B cell (primary cell): ENCODE measurements at regions of chr6 and their contacts with region 1.

Region 1: GRCh38 chr6:34757687-34758274 is 476 bp downstream of the SNRPC start:
- DNase-seq: no peak
- ATAC-seq: no peak
- H3K4me3 ChIP-seq: peak overlapping the region; percentile 87 to 99 (median 95)
- H3K4me3 Mint-ChIP-seq: no peak overlapping the region
- H3K27ac ChIP-seq: peak overlapping the region; percentile 89 to 94
- H3K27ac Mint-ChIP-seq: no peak overlapping the region
- H3K4me1 ChIP-seq: peaks cover 9 to 25% of the 10 kb centered on the region in 2 donors
- H3K4me1 Mint-ChIP-seq: peaks cover 18% of the 10 kb centered on the region
- H3K27me3 ChIP-seq: no peaks in the 10 kb centered on the region
- H3K27me3 Mint-ChIP-seq: no peaks in the 10 kb centered on the region
- CTCF ChIP-seq: no peak

Region 2: DNA sequence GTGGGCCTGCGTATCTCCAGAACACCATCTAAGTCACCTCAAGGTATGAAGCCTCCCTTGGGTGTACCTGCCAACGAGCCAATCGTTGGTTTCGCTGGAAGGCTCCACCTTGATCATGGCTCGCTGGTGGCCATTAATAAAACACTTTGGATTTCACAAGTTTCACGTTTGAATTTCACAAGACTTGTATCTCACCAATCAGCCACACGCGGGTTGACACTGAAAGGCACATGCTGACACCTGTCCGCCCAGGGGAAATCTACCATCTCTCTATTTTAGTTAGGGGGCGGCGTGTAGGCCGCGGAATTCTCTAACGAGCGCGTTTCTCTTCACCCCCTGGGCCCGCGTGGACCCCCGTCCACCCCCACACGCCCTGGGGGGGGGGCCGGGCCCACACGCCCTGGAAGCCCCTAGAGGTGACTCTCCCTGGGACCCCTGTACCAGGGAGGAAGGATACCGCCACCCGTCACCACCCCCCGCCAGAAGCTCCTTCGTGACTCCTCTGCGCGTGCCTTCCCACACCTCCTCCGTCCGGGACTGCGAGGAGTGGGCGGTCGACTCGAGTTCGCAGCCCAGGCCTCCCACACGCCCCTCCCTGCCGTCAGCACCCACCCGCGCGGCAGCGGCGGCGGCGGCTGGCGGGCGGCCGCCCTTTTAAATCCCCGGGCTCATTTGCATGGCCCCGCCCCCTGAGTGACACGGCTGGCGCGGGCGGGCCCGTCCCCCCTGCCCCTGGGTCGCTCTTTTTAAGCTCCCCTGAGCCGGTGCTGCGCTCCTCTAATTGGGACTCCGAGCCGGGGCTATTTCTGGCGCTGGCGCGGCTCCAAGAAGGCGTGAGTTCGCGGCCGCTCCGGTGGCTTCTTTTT is 521.4 kb before region 1 on chr6 and contains the start of gene HMGA1:
- CTCF ChIA-PET with region 1: no interaction called
- POLR2A ChIA-PET with region 1: no interaction called
- intact Hi-C with region 1: loop called (anchors 5 kb)
- DNase-seq: peak; percentile 96
- ATAC-seq: peak; percentile 76
- H3K4me3 ChIP-seq: peak within 1 kb of the TSS; percentile 64 to 93 (median 88)
- H3K4me3 Mint-ChIP-seq: peak within 1 kb of the TSS; percentile 92
- H3K27ac ChIP-seq: peak within 1 kb of the TSS; percentile 96 to 98
- H3K27ac Mint-ChIP-seq: peak within 1 kb of the TSS; percentile 98
- H3K4me1 ChIP-seq: peaks cover 22 to 30% of the 10 kb centered on the region in 2 donors
- H3K4me1 Mint-ChIP-seq: peaks cover 34% of the 10 kb centered on the region
- H3K27me3 ChIP-seq: no peaks in the 10 kb centered on the region
- H3K27me3 Mint-ChIP-seq: no peaks in the 10 kb centered on the region
- CTCF ChIP-seq: no peak
- total RNA-seq, gene HMGA1: 66.4 and 72.3 TPM in 2 replicates

Region 3: GRCh38 chr6:34638834-34639736 is 118.7 kb before region 1 on chr6:
- CTCF ChIA-PET with region 1: no interaction called
- POLR2A ChIA-PET with region 1: no interaction called
- intact Hi-C with region 1: loop called (anchors 2 kb)
- DNase-seq: peak; percentile 74
- ATAC-seq: peak; percentile 77
- H3K4me3 ChIP-seq: no peak overlapping the region
- H3K4me3 Mint-ChIP-seq: peak overlapping the region; percentile 79
- H3K27ac ChIP-seq: peak overlapping the region; percentile 61 to 86
- H3K27ac Mint-ChIP-seq: peak overlapping the region; percentile 70
- H3K4me1 ChIP-seq: peaks cover 17 to 21% of the 10 kb centered on the region in 2 donors
- H3K4me1 Mint-ChIP-seq: peaks cover 41% of the 10 kb centered on the region
- H3K27me3 ChIP-seq: no peaks in the 10 kb centered on the region
- H3K27me3 Mint-ChIP-seq: no peaks in the 10 kb centered on the region
- CTCF ChIP-seq: no peak

Region 4: DNA sequence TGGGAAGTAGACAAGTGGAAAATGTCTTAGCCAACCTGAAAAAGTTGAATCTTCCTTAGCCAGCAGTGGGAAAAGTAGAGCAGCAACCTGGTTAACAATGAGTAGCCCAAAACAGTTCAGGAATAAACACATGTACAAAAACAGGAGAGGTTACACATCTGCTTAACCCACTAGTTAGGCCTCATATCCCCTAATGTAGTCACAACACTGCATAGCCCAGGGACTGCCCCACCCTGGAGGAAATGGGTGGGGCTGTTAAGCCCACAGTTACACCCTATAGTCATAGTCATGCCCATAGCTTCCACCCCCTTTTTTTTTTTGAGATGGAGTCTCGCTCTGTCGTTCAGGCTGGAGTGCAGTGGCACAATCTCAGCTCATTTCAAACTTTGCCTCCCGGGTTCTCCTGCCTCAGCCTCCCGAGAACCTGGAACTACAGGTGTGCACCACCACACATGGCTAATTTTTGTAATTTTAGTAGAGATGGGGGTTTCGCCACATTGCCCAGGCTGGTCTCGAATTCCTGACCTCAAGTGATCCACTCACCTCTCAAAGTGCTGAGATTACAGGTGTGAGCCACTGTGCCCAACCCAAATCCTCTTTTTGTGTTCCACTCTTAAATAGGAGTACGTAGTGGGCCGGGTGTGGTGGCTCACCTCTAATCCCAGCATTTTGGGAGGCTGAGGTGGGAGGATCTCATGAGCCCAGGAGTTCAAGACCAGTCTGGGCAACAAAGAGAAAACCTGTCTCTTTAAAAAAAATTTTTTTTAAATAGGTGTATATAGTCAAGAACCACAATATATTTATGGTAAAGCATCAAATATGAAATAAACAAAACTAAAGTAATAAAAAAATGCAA is 85.8 kb before region 1 on chr6:
- CTCF ChIA-PET with region 1: interaction called, 5 read pairs
- POLR2A ChIA-PET with region 1: interaction called, 7 read pairs
- intact Hi-C with region 1: loop called (anchors 2 kb)
- DNase-seq: peak; percentile 90
- ATAC-seq: peak; percentile 94
- H3K4me3 ChIP-seq: peak overlapping the region; percentile 9 to 57 (median 39)
- H3K4me3 Mint-ChIP-seq: peak overlapping the region; percentile 88
- H3K27ac ChIP-seq: peak overlapping the region; percentile 96 to 98
- H3K27ac Mint-ChIP-seq: peak overlapping the region; percentile 98
- H3K4me1 ChIP-seq: peaks cover 60 to 69% of the 10 kb centered on the region in 2 donors
- H3K4me1 Mint-ChIP-seq: peaks cover 71% of the 10 kb centered on the region
- H3K27me3 ChIP-seq: no peaks in the 10 kb centered on the region
- H3K27me3 Mint-ChIP-seq: no peaks in the 10 kb centered on the region
- CTCF ChIP-seq: no peak

Region 5: DNA sequence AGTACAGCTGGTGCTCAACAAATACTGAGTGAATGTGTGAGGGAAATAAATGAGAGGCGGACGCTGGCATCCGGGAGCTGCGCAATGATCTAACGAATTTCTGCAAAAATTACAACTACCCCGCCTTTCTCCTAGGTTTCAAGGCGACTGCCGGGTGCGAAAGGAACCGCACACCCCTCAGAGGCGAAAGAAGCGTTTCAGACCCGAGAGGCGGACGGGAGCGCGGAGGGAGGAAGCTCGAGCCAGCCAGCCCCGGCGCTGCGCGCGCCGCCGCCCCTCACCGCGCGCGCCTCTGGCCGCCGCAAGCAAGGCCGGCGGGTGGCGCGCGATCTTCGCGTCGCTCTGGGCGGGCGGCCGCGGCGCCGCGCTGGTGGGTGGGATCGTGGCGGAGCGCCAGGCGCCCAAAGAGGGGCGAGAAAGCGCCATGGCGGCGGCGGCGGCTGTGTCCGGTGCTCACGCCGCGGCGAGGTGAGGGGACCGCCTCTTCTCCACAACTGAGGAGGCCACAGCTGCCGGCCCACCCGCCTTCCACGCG is 34.0 kb after region 1 on chr6 and contains the start of gene BLTP3A:
- CTCF ChIA-PET with region 1: interaction called, 3 read pairs
- POLR2A ChIA-PET with region 1: interaction called, 6 read pairs
- intact Hi-C with region 1: loop called (anchors 1 kb)
- DNase-seq: peak; percentile 90
- ATAC-seq: peak; percentile 93
- H3K4me3 ChIP-seq: peak within 1 kb of the TSS; percentile 81 to 93 (median 90)
- H3K4me3 Mint-ChIP-seq: peak within 1 kb of the TSS; percentile 94
- H3K27ac ChIP-seq: peak within 1 kb of the TSS; percentile 71 to 83
- H3K27ac Mint-ChIP-seq: peak within 1 kb of the TSS; percentile 94
- H3K4me1 ChIP-seq: peaks cover 17 to 19% of the 10 kb centered on the region in 2 donors
- H3K4me1 Mint-ChIP-seq: peaks cover 22% of the 10 kb centered on the region
- H3K27me3 ChIP-seq: no peaks in the 10 kb centered on the region
- H3K27me3 Mint-ChIP-seq: no peaks in the 10 kb centered on the region
- CTCF ChIP-seq: no peak
- total RNA-seq, gene BLTP3A: 11.3 and 13.2 TPM in 2 replicates

Region 6: GRCh38 chr6:35139908-35140655 is 382.3 kb after region 1 on chr6:
- CTCF ChIA-PET with region 1: no interaction called
- POLR2A ChIA-PET with region 1: no interaction called
- intact Hi-C with region 1: loop called (anchors 1 kb)
- DNase-seq: peak; percentile 76
- ATAC-seq: no peak
- H3K4me3 ChIP-seq: no peak overlapping the region
- H3K4me3 Mint-ChIP-seq: peak overlapping the region; percentile 42
- H3K27ac ChIP-seq: no peak overlapping the region
- H3K27ac Mint-ChIP-seq: no peak overlapping the region
- H3K4me1 ChIP-seq: peaks cover 9 to 18% of the 10 kb centered on the region in 2 donors
- H3K4me1 Mint-ChIP-seq: peaks cover 18% of the 10 kb centered on the region
- H3K27me3 ChIP-seq: peaks cover 0 to 17% (median 8%) of the 10 kb centered on the region in 4 experiments
- H3K27me3 Mint-ChIP-seq: peaks cover 18% of the 10 kb centered on the region
- CTCF ChIP-seq: peak; percentile 94